Sigmoid colon (tissue), 7 donors: ENCODE measurements at regions of chr15 and their contacts with region 1.

Region 1: DNA sequence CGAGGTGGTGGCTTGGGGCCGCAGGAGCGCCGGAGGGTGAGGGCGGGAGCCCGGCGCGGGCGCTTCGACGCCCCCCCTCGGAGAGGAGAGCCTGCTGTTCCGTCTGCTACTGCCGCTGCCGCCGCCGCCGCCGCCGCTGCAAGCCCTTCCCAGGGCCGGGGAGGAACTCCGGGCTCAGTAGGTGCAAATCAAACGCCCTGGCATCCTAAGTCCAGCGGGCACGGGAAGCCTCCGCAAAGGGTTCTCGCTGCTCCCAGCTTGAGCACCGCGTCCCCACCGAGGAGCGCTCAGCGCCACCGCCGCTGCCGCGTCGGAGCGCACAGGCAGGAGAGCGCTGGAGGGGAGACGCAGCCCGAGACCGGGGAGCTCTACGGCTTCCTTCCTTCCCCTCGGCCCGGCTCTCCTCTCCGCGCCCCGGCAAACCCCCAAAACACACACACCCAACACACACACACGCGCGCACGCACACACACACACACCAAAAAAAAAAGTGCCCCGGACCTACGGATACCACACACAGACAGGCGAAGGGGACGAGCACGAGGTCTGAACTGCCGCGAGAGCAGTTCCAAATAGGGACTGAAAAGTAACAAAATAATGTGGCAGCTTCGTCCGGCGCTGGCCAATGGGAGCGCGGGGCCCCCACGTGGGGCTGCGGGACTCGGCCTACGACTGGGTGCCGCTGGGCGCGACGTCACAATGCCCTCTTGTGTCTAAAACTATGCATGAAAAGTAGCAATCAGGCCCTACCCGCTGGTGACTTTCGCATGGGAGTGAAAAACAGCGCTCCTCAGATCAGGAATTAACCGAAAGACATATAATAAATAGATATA is at the start of gene TLE3:
- DNase-seq: peak; percentile 100
- H3K4me3 ChIP-seq: peak within 1 kb of the TSS; percentile 85 to 97 (median 94)
- H3K27ac ChIP-seq: peak within 1 kb of the TSS; percentile 93 to 99 (median 99)
- H3K4me1 ChIP-seq: peaks cover 4 to 73% (median 63%) of the 10 kb centered on the region in 4 donors
- H3K27me3 ChIP-seq: no peaks in the 10 kb centered on the region
- CTCF ChIP-seq: peak in 1 of 4 experiments; percentile 23
- EP300 ChIP-seq: peak in 1 of 4 donors; percentile 28
- POLR2A ChIP-seq: peak; percentile 92 to 96
- total RNA-seq, gene TLE3: 49.5 to 82.0 (median 58.8) TPM

Region 2: DNA sequence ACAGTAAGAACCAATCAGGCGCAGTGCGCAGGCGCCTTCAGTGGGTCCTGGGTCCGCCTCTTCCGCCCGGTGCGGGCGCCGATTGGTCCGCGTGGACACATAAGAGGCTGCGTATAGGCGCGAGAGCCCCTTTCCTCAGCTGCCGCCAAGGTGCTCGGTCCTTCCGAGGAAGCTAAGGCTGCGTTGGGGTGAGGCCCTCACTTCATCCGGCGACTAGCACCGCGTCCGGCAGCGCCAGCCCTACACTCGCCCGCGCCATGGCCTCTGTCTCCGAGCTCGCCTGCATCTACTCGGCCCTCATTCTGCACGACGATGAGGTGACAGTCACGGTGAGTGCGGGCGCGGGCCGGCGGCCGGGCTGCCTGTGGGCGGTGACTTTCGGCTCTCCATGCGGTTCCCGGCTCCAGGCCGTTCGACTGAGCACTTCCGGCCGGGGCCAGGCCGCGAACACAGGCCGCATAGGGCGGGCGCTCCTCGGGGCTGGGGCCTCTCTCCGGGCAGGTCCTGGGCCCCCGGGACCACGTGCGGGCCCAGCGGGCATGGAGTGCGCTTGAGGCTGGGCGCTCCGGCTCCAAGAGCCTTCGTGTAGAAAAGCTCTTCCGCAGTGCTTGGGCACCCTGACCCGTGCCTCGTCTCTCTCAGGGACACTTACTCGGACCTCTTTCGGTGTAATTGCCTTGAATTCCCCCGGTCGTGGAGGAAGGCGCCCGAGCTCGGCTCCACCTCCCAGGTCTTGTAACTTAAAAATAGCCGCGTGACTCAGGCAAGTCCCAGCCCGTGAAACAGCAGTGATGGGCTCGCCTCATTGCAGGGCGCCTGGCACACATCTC is 644.6 kb before region 1 on chr15 and contains the start of gene RPLP1:
- intact Hi-C with region 1: loop called (anchors 2 kb)
- DNase-seq: peak; percentile 99
- H3K4me3 ChIP-seq: peak within 1 kb of the TSS; percentile 79 to 92 (median 88)
- H3K27ac ChIP-seq: peak within 1 kb of the TSS; percentile 94 to 97 (median 96)
- H3K4me1 ChIP-seq: peaks cover 0 to 37% (median 28%) of the 10 kb centered on the region in 4 donors
- H3K27me3 ChIP-seq: no peaks in the 10 kb centered on the region
- CTCF ChIP-seq: no peak
- EP300 ChIP-seq: no peak
- POLR2A ChIP-seq: peak; percentile 88 to 89
- total RNA-seq, gene RPLP1: 1,053 to 1,114 (median 1,095) TPM

Region 3: DNA sequence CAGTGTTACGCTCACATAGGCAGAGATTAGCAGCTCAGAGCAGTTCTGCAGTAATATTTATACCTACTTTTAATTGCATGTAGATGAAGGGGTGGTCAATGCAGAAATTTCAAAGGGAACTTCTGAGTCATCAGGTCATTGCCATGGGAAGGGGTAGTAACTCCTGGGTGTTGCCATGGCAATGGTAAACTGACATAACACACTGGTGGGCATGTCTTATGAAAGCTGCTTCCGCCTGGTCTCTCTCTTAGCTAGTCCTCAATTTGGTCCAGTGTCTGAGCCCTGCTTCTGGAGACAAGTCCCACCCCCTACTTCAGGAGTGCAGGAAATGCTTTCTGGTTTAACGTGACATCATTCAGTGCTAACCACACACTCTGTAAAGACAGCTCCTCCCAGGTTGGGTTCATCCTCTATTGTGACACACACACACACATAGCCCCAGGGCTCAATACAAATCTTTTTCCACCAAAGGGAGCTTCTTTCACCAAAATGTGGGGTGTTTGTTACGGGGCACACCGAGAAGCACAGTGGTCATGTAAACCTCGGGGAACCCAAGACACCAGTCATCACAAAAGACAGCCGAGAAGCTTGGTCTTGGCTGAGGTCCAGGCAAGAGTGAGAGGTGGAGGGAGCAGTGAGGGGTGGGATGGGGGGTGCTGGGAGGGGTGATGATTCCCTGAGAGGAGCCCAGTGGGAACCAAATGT is 74.3 kb before region 1 on chr15:
- intact Hi-C with region 1: loop called (anchors 2 kb)
- DNase-seq: no peak
- H3K4me3 ChIP-seq: no peak overlapping the region
- H3K27ac ChIP-seq: peak overlapping the region; percentile 66 to 78 (median 73)
- H3K4me1 ChIP-seq: peaks cover 0 to 38% (median 38%) of the 10 kb centered on the region in 4 donors
- H3K27me3 ChIP-seq: no peaks in the 10 kb centered on the region
- CTCF ChIP-seq: no peak
- EP300 ChIP-seq: no peak
- POLR2A ChIP-seq: no peak

Region 4: GRCh38 chr15:70196314-70197291 is 99.0 kb after region 1 on chr15:
- intact Hi-C with region 1: loop called (anchors 1 kb)
- DNase-seq: peak; percentile 80
- H3K4me3 ChIP-seq: no peak overlapping the region
- H3K27ac ChIP-seq: peak overlapping the region; percentile 31 to 85 (median 80)
- H3K4me1 ChIP-seq: peaks cover 0 to 48% (median 39%) of the 10 kb centered on the region in 4 donors
- H3K27me3 ChIP-seq: no peaks in the 10 kb centered on the region
- CTCF ChIP-seq: no peak
- EP300 ChIP-seq: no peak
- POLR2A ChIP-seq: no peak

Region 5: DNA sequence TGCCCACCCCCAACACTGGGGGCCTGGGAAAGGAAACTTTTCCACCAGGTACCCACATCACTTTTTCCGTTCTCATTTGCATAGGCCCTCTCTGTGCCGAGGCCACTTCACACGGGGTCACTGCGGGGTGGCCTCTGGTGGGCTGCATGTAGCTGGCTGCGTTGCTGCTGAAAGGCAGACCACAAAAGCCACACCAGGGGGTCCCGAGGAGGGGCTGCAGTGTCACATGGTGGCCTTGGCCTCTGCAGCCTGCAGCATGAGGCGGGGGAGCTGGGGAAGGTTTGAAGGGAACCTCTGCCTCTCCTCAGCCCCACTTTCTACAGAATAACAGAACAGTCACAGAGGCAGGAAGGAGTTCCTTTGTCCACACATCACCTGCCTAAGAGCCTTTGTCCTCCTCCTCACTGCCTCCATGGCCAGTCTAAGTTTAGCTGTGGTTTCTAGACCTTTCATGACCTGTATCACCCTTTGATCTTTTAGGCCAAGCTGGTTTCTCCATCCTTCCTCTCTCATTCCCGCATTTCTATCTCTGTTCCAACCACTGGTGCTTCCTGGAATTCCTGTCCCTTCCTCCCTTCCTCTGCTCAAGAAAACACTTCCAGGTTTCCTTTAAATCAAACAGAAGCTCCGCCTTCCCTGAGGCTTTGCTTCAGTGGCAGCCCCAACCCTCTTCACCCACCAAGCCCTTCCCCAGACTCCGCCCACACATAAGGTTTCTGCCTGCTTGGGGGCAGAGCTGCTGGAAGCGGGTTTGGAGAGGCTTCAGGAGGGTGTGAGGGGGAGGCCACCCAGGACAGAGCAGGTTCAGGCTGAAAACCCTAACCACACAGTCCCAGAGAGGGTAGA is 150.8 kb after region 1 on chr15:
- intact Hi-C with region 1: no loop called
- DNase-seq: peak; percentile 49
- H3K4me3 ChIP-seq: no peak overlapping the region
- H3K27ac ChIP-seq: no peak overlapping the region
- H3K4me1 ChIP-seq: peaks cover 0 to 7% (median 0%) of the 10 kb centered on the region in 4 donors
- H3K27me3 ChIP-seq: no peaks in the 10 kb centered on the region
- CTCF ChIP-seq: no peak
- EP300 ChIP-seq: no peak
- POLR2A ChIP-seq: no peak

Region 6: GRCh38 chr15:70318594-70319465 is 221.3 kb after region 1 on chr15:
- intact Hi-C with region 1: loop called (anchors 2 kb)
- DNase-seq: peak; percentile 94
- H3K4me3 ChIP-seq: no peak overlapping the region
- H3K27ac ChIP-seq: peak overlapping the region; percentile 42 to 91 (median 86)
- H3K4me1 ChIP-seq: peaks cover 0 to 64% (median 58%) of the 10 kb centered on the region in 4 donors
- H3K27me3 ChIP-seq: no peaks in the 10 kb centered on the region
- CTCF ChIP-seq: no peak
- EP300 ChIP-seq: peak; percentile 9 to 76 (median 48)
- POLR2A ChIP-seq: no peak

Region 7: GRCh38 chr15:70463460-70463881 is 365.9 kb after region 1 on chr15:
- intact Hi-C with region 1: loop called (anchors 5 kb)
- DNase-seq: no peak
- H3K4me3 ChIP-seq: no peak overlapping the region
- H3K27ac ChIP-seq: no peak overlapping the region
- H3K4me1 ChIP-seq: peaks cover 0 to 11% (median 4%) of the 10 kb centered on the region in 4 donors
- H3K27me3 ChIP-seq: no peaks in the 10 kb centered on the region
- CTCF ChIP-seq: no peak
- EP300 ChIP-seq: no peak
- POLR2A ChIP-seq: no peak